ENCODE measurements at regions of chr1 and their contacts with region 1.

Region 1: GRCh38 chr1:168335500-168335899 is 54.8 kb downstream of the TBX19 start:
- DNase-seq: peak in 1 of 14 experiments; percentile 29
- ATAC-seq: no peak
- H3K4me3 ChIP-seq: no peak overlapping the region
- H3K4me3 Mint-ChIP-seq: no peak overlapping the region
- H3K27ac ChIP-seq: no peak overlapping the region
- H3K27ac Mint-ChIP-seq: no peak overlapping the region
- H3K4me1 ChIP-seq: no peaks in the 10 kb centered on the region
- H3K4me1 Mint-ChIP-seq: no peaks in the 10 kb centered on the region
- H3K27me3 ChIP-seq: no peaks in the 10 kb centered on the region
- H3K27me3 Mint-ChIP-seq: no peaks in the 10 kb centered on the region
- CTCF ChIP-seq: no peak

Region 2: DNA sequence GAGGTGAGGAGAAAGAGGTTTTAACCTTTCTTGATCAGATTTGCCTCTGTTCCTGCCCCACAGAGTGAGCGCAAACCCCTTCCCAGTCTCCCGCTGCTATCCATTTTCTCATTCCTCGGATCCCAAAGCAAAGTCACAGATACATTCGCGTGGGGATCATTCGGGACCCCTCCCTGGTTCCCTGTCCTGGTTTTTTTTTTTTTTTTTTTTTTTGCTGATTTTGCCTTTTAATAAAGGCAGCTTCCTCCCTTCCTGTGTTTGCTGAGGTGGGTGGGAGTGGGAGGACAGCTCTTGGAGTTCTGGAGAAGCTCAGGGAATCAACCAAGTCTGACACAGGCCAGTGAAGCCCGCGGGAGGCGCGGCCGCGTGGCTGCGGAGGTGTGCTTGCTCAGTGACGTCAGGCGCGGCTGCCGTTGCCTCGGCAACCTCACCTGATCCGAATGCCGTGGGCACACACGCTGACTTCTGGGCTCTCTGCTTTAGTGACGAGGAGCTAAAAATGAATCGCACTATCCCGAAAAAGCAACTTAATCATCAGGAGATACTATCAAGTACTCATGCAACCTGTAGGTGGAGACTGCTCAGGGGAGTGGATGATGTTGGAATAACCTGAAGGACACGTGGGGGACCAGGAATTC is 51.6 kb after region 1 on chr1:
- CTCF ChIA-PET with region 1: no interaction called
- POLR2A ChIA-PET with region 1: no interaction called
- intact Hi-C with region 1: loop called in 1 of 2 experiments (anchors 10 kb)
- DNase-seq: peak; percentile 48 to 91 (median 69)
- ATAC-seq: peak; percentile 95
- H3K4me3 ChIP-seq: no peak overlapping the region
- H3K4me3 Mint-ChIP-seq: peak overlapping the region; percentile 18
- H3K27ac ChIP-seq: no peak overlapping the region
- H3K27ac Mint-ChIP-seq: peak overlapping the region; percentile 70
- H3K4me1 ChIP-seq: peaks cover 24% of the 10 kb centered on the region
- H3K4me1 Mint-ChIP-seq: peaks cover 19% of the 10 kb centered on the region
- H3K27me3 ChIP-seq: no peaks in the 10 kb centered on the region
- H3K27me3 Mint-ChIP-seq: peaks cover 8% of the 10 kb centered on the region
- CTCF ChIP-seq: no peak

Region 3: DNA sequence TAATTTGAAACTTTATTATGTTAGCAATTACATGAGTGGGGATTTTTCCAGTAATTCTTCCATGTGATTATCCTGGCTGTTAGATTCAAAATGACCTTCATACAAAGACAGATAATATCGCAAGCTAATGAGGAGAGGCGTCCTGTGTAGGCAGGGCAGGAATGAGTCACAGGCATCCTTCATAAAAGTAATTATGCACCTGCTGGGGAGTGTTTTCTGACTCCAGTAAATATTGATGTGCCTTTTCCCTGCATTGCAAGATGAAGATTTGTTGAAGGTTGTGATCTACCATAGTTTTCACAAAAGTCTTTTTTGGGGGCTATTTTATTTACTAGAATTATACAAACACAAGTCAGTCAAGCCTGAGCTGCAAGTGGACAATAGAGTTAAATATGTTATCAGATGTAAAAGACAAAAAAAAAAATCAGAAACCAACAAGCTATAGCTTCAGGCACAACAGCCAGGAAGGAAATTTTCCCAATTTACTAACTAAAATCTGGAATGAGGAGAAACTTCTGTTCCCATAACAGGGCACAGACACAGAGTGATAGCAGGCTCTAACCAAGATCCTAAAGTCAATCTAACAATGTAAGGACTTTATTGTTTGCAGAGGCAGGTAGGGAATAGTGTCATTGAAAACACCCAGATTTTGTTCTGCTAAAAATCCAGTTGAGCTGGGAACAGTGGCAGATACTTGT is 604.2 kb after region 1 on chr1:
- CTCF ChIA-PET with region 1: no interaction called
- POLR2A ChIA-PET with region 1: no interaction called
- intact Hi-C with region 1: no loop called
- DNase-seq: no peak
- ATAC-seq: no peak
- H3K4me3 ChIP-seq: no peak overlapping the region
- H3K4me3 Mint-ChIP-seq: no peak overlapping the region
- H3K27ac ChIP-seq: no peak overlapping the region
- H3K27ac Mint-ChIP-seq: no peak overlapping the region
- H3K4me1 ChIP-seq: no peaks in the 10 kb centered on the region
- H3K4me1 Mint-ChIP-seq: no peaks in the 10 kb centered on the region
- H3K27me3 ChIP-seq: peaks cover 0 to 5% of the 10 kb centered on the region in 2 experiments
- H3K27me3 Mint-ChIP-seq: peaks cover 23% of the 10 kb centered on the region
- CTCF ChIP-seq: no peak